MCF 10A (cell line): ENCODE measurements at regions of chr11 and their contacts with region 1.

Region 1: GRCh38 chr11:120172054-120172911 is 34.4 kb upstream of the TRIM29 start:
- DNase-seq: peak; percentile 70
- H3K4me3 Mint-ChIP-seq: no peak overlapping the region
- H3K27ac Mint-ChIP-seq: no peak overlapping the region
- H3K4me1 Mint-ChIP-seq: no peaks in the 10 kb centered on the region
- H3K27me3 Mint-ChIP-seq: peaks cover 58% of the 10 kb centered on the region
- CTCF ChIP-seq: peak; percentile 87

Region 2: DNA sequence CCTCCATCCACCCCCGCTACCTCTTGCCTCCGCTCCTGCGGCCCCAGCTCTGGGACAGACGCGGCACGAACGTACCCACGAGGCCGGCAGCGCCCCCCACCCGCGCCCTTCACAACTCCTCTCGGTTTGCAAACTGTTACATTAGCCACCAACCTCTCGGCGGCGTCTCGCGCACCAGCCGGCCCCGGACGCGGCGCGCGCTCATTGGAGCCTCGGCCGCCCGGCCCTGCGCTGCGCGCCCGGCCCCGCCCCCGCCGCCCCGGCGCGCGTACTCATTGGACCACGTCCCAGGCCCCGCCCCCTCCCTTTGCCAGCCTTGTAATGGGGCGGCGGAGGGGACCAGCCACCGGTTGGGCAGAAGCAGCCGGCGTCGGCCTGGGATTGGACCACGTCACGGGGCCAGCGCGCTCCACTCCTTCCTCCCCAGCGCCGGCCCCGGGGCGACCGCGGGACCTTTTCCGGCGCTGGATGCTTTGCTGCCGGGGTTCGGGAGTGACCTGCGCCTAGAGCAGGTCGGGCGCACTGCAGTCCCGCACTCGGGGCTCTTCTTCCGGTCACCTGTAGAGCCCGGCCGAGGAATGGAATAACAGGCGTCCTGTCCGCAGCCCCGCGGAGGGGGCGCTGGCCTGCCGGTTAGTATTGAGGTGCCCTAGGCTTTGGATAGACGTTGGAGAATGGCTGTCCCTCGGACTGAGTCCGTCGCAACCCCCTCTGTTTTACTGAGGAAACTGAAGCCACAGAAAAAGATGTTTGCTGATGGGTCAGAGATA is 1115.1 kb before region 1 on chr11 and contains the start of gene HYOU1:
- CTCF ChIA-PET with region 1: no interaction called
- POLR2A ChIA-PET with region 1: no interaction called
- intact Hi-C with region 1: no loop called
- DNase-seq: peak; percentile 97
- H3K4me3 Mint-ChIP-seq: peak within 1 kb of the TSS; percentile 96
- H3K27ac Mint-ChIP-seq: peak within 1 kb of the TSS; percentile 98
- H3K4me1 Mint-ChIP-seq: peaks cover 19% of the 10 kb centered on the region
- H3K27me3 Mint-ChIP-seq: no peaks in the 10 kb centered on the region
- CTCF ChIP-seq: peak; percentile 29
- total RNA-seq, gene HYOU1: 398 and 664 TPM in 2 replicates

Region 3: DNA sequence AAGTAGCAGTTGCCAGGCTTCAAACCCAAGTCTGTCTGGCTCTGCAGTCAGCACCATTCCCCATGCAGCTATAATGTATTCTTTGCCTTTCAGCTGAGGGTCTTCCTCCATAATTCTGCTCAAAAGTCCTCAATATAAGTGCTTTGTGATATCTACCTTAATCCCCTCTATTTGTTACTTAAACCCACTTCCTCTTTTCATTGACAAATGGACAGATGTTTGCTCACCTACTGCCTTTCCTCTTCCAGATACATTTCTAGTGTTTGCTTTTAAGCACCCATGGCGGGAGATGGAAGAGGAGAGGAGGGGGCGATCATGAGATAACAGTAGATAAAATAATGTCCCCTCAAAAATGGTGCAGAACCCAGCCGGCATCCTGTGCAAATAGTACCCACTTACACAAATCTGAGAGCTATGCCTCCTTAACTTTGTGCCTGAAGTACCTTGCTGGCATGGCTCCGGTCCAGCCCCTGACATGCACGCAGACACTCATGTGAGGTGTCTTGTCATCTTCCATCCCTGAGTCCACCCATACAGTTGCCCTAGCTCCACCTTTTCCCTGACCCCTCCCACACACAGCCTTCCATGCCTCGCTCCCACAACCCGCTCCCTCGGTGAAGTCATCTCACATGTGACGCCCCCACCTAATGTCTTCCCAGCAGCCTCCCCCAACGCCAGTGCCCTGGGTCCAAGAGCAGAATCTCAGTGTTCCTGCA is 143.9 kb before region 1 on chr11:
- CTCF ChIA-PET with region 1: no interaction called
- POLR2A ChIA-PET with region 1: no interaction called
- intact Hi-C with region 1: no loop called
- DNase-seq: no peak
- H3K4me3 Mint-ChIP-seq: no peak overlapping the region
- H3K27ac Mint-ChIP-seq: no peak overlapping the region
- H3K4me1 Mint-ChIP-seq: peaks cover 5% of the 10 kb centered on the region
- H3K27me3 Mint-ChIP-seq: peaks cover 67% of the 10 kb centered on the region
- CTCF ChIP-seq: no peak

Region 4: DNA sequence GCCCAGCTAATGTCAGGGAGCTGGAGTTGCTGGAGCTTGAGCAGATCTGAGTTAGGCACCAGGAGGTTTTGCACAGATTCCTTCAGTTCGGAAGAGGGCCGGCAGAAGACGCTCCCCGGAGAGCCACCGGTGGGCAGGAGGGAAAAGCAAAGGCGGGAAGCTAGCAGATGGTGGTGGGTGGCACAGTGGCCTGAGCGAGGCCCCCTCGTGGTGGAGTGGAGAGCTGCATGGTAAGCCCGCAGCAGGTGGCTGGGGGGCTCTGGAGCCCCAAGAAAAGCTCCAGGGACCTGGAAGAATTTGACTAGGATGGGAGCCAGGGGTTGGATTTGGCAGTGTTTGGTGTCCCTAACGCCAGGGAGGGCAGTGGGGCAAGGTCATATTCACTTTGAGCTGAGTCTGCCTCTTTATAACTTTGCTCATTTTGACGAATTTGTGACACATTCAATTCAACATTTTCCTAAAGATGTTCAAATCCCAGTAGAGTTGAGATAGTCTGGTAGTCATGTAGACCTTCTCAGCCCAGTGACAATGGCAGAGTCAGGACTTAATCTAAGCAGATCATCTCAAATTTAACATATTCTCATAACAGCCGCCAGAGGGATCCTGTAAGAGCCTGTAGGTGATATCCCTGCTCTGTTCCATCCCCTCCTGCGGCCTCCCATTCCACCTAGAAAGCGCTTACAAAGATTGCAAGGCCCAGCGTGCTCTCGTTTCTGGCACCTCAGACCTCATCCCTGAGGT is 92.4 kb before region 1 on chr11:
- CTCF ChIA-PET with region 1: no interaction called
- POLR2A ChIA-PET with region 1: no interaction called
- intact Hi-C with region 1: no loop called
- DNase-seq: no peak
- H3K4me3 Mint-ChIP-seq: no peak overlapping the region
- H3K27ac Mint-ChIP-seq: no peak overlapping the region
- H3K4me1 Mint-ChIP-seq: peaks cover 5% of the 10 kb centered on the region
- H3K27me3 Mint-ChIP-seq: peaks cover 20% of the 10 kb centered on the region
- CTCF ChIP-seq: no peak

Region 5: GRCh38 chr11:120121871-120122473 is 50.3 kb before region 1 on chr11:
- CTCF ChIA-PET with region 1: interaction called, 5 read pairs
- POLR2A ChIA-PET with region 1: interaction called, 3 read pairs
- intact Hi-C with region 1: loop called (anchors 5 kb)
- DNase-seq: peak; percentile 60
- H3K4me3 Mint-ChIP-seq: peak overlapping the region; percentile 65
- H3K27ac Mint-ChIP-seq: peak overlapping the region; percentile 91
- H3K4me1 Mint-ChIP-seq: peaks cover 50% of the 10 kb centered on the region
- H3K27me3 Mint-ChIP-seq: no peaks in the 10 kb centered on the region
- CTCF ChIP-seq: no peak

Region 6: GRCh38 chr11:120137611-120138521 is 34.4 kb before region 1 on chr11 and contains the start of gene TRIM29:
- CTCF ChIA-PET with region 1: interaction called, 68 read pairs
- POLR2A ChIA-PET with region 1: interaction called, 10 read pairs
- intact Hi-C with region 1: loop called (anchors 2 kb)
- DNase-seq: peak; percentile 73
- H3K4me3 Mint-ChIP-seq: peak within 1 kb of the TSS; percentile 88
- H3K27ac Mint-ChIP-seq: peak within 1 kb of the TSS; percentile 87
- H3K4me1 Mint-ChIP-seq: peaks cover 25% of the 10 kb centered on the region
- H3K27me3 Mint-ChIP-seq: no peaks in the 10 kb centered on the region
- CTCF ChIP-seq: peak; percentile 66
- total RNA-seq, gene TRIM29: 60.9 and 93.4 TPM in 2 replicates